ENCODE measurements at regions of chr5 and their contacts with region 1.

Region 1: DNA sequence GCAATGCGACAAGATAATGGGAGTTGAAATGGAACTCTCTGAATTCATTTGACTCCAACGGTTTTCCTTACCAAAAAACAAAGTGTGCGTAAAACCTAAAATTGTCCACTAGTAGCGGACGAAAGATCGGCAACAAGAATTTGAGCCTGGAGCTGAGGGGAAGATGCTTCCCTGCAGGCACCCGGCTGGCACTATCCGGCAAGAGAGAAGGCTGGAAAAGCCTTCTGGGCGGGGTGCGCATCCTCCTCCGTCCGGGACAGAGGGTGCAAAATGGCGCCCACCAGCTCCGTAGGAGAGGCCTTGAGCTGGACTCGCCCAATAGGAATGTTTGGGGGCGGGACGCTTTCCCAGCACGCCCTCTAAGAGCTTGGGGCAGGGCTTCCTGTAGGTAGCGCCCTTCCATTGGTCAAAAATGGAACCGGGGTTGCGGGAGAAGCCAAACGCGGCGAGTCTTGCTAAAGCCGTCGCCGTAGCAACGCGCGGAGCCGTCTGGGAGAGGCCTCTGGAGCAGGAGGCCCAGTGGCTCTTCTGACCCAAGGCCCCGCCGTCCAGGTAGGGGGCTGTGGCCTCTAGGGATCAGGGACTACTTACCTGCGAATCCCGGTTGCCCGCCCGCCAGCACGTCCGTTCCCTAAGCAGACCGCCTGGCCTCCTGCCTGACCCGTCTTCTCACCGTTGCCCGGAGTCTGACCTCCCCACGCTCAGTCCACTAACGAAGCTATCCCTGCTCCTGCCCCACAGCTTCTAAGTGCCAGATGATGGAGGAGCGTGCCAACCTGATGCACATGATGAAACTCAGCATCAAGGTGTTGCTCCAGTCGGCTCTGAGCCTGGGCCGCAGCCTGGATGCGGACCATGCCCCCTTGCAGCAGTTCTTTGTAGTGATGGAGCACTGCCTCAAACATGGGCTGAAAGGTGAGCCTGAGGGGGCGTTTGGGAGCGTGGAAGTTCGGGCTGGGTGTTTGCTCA is 9.2 kb downstream of the RUFY1 start:
- DNase-seq: peak; percentile 96 to 99
- ATAC-seq: peak; percentile 97

Region 2: DNA sequence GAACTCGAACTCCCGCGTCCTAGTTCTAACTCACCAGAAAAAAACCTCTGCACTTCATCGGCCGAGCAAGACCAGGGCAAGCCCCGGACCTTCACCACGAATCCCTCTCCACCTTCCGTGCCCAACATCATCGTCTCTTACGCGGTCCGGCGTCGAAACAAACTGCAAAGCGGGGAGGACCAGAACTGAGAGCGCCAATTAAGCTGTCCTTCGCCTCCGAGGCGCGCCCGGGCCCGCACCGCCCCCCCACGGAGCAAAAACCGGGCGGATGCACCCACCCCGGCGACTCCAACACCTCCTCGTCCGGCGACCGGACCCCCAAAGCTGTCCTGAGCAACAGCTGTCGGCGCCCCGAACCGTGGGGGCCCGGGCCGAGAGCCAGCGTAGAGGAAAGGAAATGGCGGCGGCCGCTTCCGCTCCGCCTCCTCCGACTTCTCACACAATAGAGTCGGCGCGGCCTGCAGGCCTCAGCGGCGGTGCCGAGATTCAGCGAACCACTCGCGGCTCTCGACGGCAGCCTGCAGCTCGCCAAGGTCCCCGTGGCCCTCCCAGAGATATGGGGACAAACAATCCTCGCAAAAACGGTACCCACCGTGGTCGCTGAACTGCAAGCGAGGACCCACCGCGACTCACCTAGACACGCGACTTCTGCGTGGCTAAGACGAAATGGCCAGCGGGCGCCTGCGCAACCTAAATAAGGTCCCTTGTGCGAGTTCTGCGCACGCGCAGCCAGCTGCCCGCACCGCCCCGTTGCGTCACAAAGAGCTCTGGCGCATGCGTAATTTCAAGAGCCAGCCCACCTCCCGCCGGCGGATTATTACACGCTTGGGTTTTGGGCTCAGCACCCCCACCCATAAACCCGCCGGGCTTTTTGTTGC is 63.7 kb after region 1 on chr5 and contains the start of gene HNRNPH1:
- intact Hi-C with region 1: loop called in 1 of 2 experiments (anchors 10 kb)
- DNase-seq: peak; percentile 98 to 99
- ATAC-seq: peak; percentile 84
- total RNA-seq, gene HNRNPH1: 352 to 431 TPM

Region 3: DNA sequence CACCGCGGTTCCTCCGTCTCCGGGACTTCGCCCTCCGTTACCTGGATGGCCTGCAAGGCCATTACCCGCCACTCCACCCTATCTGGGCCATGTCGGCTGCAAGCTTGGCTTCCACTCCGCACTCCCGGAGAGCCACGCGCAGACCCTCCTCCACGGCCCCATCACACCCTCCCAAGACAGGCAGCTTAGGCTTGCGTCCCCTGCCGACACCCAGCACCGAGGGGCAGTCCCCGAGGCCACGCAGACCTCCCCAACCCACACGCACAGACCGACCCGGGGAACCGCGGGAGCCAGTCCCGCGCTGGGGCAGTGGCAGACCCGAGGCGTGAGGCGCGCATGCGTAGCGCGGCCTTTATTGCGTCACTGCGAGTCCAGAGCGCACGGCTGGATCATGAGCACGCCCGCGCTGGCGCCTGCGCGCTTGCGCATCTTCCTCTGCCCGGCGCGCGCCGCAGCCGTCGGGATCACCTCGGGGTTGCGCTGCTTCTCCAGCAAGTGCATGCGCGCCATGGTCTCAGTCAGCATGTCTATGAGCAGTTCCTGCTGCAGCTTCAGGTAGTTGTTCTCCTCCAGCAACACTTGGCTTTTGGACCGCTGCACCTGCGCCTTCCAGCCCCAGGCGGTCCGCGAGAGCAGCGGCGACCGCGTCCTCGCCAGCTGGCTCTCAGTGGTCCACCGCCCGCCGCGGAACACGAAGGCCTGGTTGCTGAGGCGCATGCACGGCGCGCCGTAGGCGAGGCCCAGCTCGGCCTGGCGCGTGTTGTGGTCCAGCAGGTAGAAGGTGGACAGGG is 118.8 kb after region 1 on chr5:
- intact Hi-C with region 1: no loop called
- DNase-seq: peak; percentile 95 to 97
- ATAC-seq: peak; percentile 91